Activated CD4-positive, alpha-beta T cell treated with anti-CD3 and anti-CD28 coated beads for 36 hours (primary cell): ENCODE measurements at regions of chr11 and their contacts with region 1.

Region 1: GRCh38 chr11:83156150-83156995 is 558 bp upstream of the PCF11 start:
- DNase-seq: peak; percentile 99
- ATAC-seq: peak; percentile 92
- H3K4me3 Mint-ChIP-seq: peak overlapping the region; percentile 100
- H3K27ac Mint-ChIP-seq: peak overlapping the region; percentile 100
- H3K4me1 Mint-ChIP-seq: peaks cover 23% of the 10 kb centered on the region
- H3K27me3 Mint-ChIP-seq: no peaks in the 10 kb centered on the region

Region 2: GRCh38 chr11:82288471-82288870 is 867.9 kb before region 1 on chr11:
- CTCF ChIA-PET with region 1: no interaction called
- POLR2A ChIA-PET with region 1: no interaction called
- intact Hi-C with region 1: no loop called
- DNase-seq: no peak
- ATAC-seq: no peak
- H3K4me3 Mint-ChIP-seq: no peak overlapping the region
- H3K27ac Mint-ChIP-seq: no peak overlapping the region
- H3K4me1 Mint-ChIP-seq: no peaks in the 10 kb centered on the region
- H3K27me3 Mint-ChIP-seq: no peaks in the 10 kb centered on the region

Region 3: DNA sequence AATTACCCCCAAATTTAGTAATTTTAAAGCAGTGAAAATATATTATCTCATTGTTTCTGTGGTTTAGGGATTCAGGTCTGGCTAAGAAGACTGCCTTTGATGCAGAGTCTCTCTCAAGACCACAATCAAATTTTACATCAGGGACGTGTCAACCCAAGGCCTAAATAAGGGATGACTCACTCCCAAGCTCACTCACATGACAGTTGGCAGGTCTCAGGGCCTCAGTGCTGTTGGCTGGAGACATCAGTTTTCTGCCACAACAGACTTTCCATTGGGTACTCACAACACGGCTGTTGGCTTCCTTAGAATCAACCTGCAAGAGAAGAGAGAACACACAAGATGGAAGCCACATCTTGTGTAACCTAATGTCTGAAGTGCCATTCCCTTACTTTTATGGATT is 800.1 kb before region 1 on chr11:
- CTCF ChIA-PET with region 1: no interaction called
- POLR2A ChIA-PET with region 1: no interaction called
- intact Hi-C with region 1: no loop called
- DNase-seq: no peak
- ATAC-seq: no peak
- H3K4me3 Mint-ChIP-seq: no peak overlapping the region
- H3K27ac Mint-ChIP-seq: no peak overlapping the region
- H3K4me1 Mint-ChIP-seq: no peaks in the 10 kb centered on the region
- H3K27me3 Mint-ChIP-seq: no peaks in the 10 kb centered on the region

Region 4: GRCh38 chr11:82796998-82797964 is 359.1 kb before region 1 on chr11:
- CTCF ChIA-PET with region 1: no interaction called
- POLR2A ChIA-PET with region 1: no interaction called
- intact Hi-C with region 1: no loop called
- DNase-seq: no peak
- ATAC-seq: no peak
- H3K4me3 Mint-ChIP-seq: no peak overlapping the region
- H3K27ac Mint-ChIP-seq: no peak overlapping the region
- H3K4me1 Mint-ChIP-seq: no peaks in the 10 kb centered on the region
- H3K27me3 Mint-ChIP-seq: peaks cover 4% of the 10 kb centered on the region

Region 5: DNA sequence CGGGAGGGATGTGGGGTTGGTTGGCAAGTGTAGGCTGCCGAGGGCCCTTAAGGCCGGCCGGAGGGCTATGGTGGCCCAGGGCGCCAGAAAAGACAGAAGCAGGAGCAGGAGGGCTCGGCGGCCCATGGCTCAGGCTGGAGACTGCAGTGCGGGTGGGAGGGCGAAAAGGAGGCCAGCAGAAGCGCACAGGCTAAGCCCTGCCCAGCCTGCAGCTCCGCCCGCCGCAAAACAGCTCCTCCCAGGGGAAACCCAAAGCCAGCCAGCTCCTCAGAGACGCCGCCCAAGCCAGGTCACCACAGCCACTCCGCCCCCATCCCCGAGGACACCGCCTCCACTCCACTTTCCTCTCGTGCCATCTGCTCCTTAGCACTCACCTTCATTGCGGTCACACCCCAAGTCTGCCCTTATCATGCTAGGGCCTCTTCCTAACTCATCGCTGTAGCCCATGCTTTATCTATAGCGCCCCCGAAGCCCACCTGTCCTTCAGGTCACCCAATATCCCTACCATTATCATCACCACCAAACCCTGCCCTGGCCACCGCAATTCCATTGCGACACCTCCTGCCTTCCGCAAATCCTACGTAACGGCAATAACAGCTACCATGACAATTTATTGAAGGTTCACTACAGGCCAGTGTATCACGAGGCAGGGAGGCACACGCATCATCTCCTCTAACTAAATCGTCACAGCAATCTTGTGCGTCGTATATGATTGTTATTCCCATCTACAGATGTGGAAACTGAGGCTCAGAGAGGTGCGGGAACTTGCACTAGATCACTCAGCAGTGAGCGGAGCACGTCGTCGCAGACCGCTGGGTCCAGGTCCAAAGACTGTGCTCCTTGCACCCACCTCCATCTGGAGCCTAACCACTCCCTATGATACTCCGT is 255.9 kb before region 1 on chr11 and contains the start of gene PRCP:
- CTCF ChIA-PET with region 1: interaction called, 15 read pairs
- POLR2A ChIA-PET with region 1: interaction called, 15 read pairs
- intact Hi-C with region 1: loop called (anchors 1 kb)
- DNase-seq: peak; percentile 97
- ATAC-seq: peak; percentile 85
- H3K4me3 Mint-ChIP-seq: peak within 1 kb of the TSS; percentile 91
- H3K27ac Mint-ChIP-seq: peak within 1 kb of the TSS; percentile 100
- H3K4me1 Mint-ChIP-seq: peaks cover 44% of the 10 kb centered on the region
- H3K27me3 Mint-ChIP-seq: no peaks in the 10 kb centered on the region
- total RNA-seq, gene PRCP: 18.2 to 23.4 TPM

Region 6: GRCh38 chr11:82959987-82960778 is 196.2 kb before region 1 on chr11:
- CTCF ChIA-PET with region 1: no interaction called
- POLR2A ChIA-PET with region 1: interaction called, 4 read pairs
- intact Hi-C with region 1: loop called in 1 of 2 experiments (anchors 1 kb)
- DNase-seq: peak; percentile 43
- ATAC-seq: peak; percentile 92
- H3K4me3 Mint-ChIP-seq: peak overlapping the region; percentile 12
- H3K27ac Mint-ChIP-seq: peak overlapping the region; percentile 70
- H3K4me1 Mint-ChIP-seq: peaks cover 74% of the 10 kb centered on the region
- H3K27me3 Mint-ChIP-seq: no peaks in the 10 kb centered on the region

Region 7: GRCh38 chr11:83007909-83008580 is 148.3 kb before region 1 on chr11:
- CTCF ChIA-PET with region 1: interaction called, 3 read pairs
- POLR2A ChIA-PET with region 1: interaction called, 11 read pairs
- intact Hi-C with region 1: loop called in 1 of 2 experiments (anchors 5 kb)
- DNase-seq: peak; percentile 14
- ATAC-seq: no peak
- H3K4me3 Mint-ChIP-seq: peak overlapping the region; percentile 20
- H3K27ac Mint-ChIP-seq: peak overlapping the region; percentile 63
- H3K4me1 Mint-ChIP-seq: peaks cover 45% of the 10 kb centered on the region
- H3K27me3 Mint-ChIP-seq: no peaks in the 10 kb centered on the region

Region 8: GRCh38 chr11:83115551-83115950 is 40.8 kb before region 1 on chr11:
- CTCF ChIA-PET with region 1: no interaction called
- POLR2A ChIA-PET with region 1: interaction called, 4 read pairs
- intact Hi-C with region 1: loop called (anchors 2 to 5 kb)
- DNase-seq: no peak
- ATAC-seq: no peak
- H3K4me3 Mint-ChIP-seq: no peak overlapping the region
- H3K27ac Mint-ChIP-seq: no peak overlapping the region
- H3K4me1 Mint-ChIP-seq: peaks cover 30% of the 10 kb centered on the region
- H3K27me3 Mint-ChIP-seq: no peaks in the 10 kb centered on the region

Region 9: GRCh38 chr11:83193315-83194280 is 37.2 kb after region 1 on chr11 and contains the start of gene ANKRD42:
- CTCF ChIA-PET with region 1: interaction called, 3 read pairs
- POLR2A ChIA-PET with region 1: interaction called, 3 read pairs
- intact Hi-C with region 1: loop called (anchors 1 kb)
- DNase-seq: peak; percentile 92
- ATAC-seq: peak; percentile 75
- H3K4me3 Mint-ChIP-seq: peak within 1 kb of the TSS; percentile 95
- H3K27ac Mint-ChIP-seq: peak within 1 kb of the TSS; percentile 98
- H3K4me1 Mint-ChIP-seq: peaks cover 40% of the 10 kb centered on the region
- H3K27me3 Mint-ChIP-seq: no peaks in the 10 kb centered on the region
- total RNA-seq, gene ANKRD42: 3.1 to 4.9 TPM